T-cell (primary cell): ENCODE measurements at regions of chr15 and their contacts with region 1.

Region 1: DNA sequence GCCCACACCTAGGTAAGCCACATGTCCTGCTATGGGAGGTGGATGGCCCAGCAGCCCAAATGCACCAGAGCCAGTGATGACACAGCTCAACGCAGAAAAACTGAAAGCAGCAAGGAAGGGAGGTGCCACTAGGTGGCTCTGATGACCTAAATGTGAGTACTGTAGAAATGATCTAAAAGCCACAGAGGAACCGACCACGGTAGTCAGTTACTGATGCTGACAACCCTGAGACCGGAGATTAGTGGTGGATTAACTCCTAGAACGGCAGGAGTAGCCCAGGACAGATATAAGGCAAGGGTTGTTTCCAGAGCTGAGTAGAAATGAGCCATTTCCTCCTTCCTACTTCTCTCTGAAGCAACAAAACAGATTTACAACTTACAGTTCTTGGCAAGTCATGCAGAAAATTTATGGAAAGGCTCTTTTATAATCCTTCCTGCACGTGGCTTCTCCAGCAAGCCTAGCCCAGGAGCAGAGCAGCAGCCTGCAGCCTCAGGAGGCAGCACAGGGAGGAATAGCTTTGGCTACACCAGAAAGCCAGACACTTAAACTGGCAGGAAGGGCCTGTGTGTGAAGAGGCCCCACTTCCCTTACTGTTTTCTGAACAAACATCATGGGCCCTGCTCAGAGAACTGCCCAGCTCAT is 13.1 kb downstream of the FBXL22 start:
- DNase-seq: peak; percentile 27 to 84 (median 66)
- ATAC-seq: peak; percentile 80 to 82 (median 81)
- H3K4me3 ChIP-seq: no peak overlapping the region
- H3K4me3 Mint-ChIP-seq: peak overlapping the region in 1 of 3 donors; percentile 24
- H3K27ac ChIP-seq: peak overlapping the region; percentile 79
- H3K27ac Mint-ChIP-seq: peak overlapping the region; percentile 96 to 98
- H3K4me1 ChIP-seq: peaks cover 19 to 34% of the 10 kb centered on the region in 2 experiments
- H3K4me1 Mint-ChIP-seq: peaks cover 35 to 51% (median 44%) of the 10 kb centered on the region in 3 donors
- H3K27me3 ChIP-seq: no peaks in the 10 kb centered on the region
- H3K27me3 Mint-ChIP-seq: no peaks in the 10 kb centered on the region

Region 2: GRCh38 chr15:62912808-62913207 is 697.5 kb before region 1 on chr15:
- CTCF ChIA-PET with region 1: no interaction called
- POLR2A ChIA-PET with region 1: no interaction called
- DNase-seq: no peak
- ATAC-seq: no peak
- H3K4me3 ChIP-seq: no peak overlapping the region
- H3K4me3 Mint-ChIP-seq: no peak overlapping the region
- H3K27ac ChIP-seq: no peak overlapping the region
- H3K27ac Mint-ChIP-seq: no peak overlapping the region
- H3K4me1 ChIP-seq: no peaks in the 10 kb centered on the region
- H3K4me1 Mint-ChIP-seq: no peaks in the 10 kb centered on the region
- H3K27me3 ChIP-seq: peaks cover 0 to 24% of the 10 kb centered on the region in 2 experiments
- H3K27me3 Mint-ChIP-seq: peaks cover 20% of the 10 kb centered on the region in 2 donors

Region 3: DNA sequence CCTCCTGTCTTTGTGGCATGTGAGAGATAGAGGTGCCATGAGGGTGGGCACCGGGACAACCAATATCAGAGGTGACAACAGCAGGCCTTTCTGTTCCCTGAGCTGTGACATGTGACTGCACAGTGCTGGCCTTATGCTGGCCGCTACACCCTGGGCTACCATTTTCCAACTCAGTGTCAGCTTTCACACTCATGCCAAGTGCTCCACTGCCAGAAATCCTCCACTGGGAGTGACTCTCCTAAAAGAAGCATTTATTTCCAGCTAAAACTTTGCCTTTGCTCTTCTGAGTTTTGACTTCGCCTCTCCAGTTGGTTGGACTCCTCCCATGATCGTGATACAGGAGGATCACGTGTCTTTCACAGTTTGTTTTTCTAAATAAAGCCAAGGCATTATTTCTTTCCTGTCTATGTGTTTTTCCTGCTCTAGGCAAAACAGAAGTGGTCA is 260.1 kb before region 1 on chr15:
- CTCF ChIA-PET with region 1: no interaction called
- POLR2A ChIA-PET with region 1: no interaction called
- DNase-seq: no peak
- ATAC-seq: no peak
- H3K4me3 ChIP-seq: no peak overlapping the region
- H3K4me3 Mint-ChIP-seq: no peak overlapping the region
- H3K27ac ChIP-seq: no peak overlapping the region
- H3K27ac Mint-ChIP-seq: no peak overlapping the region
- H3K4me1 ChIP-seq: no peaks in the 10 kb centered on the region
- H3K4me1 Mint-ChIP-seq: no peaks in the 10 kb centered on the region
- H3K27me3 ChIP-seq: peaks cover 0 to 7% of the 10 kb centered on the region in 2 experiments
- H3K27me3 Mint-ChIP-seq: peaks cover 0 to 5% of the 10 kb centered on the region in 2 donors

Region 4: GRCh38 chr15:63655683-63656372 is 45.5 kb after region 1 on chr15:
- CTCF ChIA-PET with region 1: no interaction called
- POLR2A ChIA-PET with region 1: no interaction called
- DNase-seq: no peak
- ATAC-seq: no peak
- H3K4me3 ChIP-seq: no peak overlapping the region
- H3K4me3 Mint-ChIP-seq: no peak overlapping the region
- H3K27ac ChIP-seq: no peak overlapping the region
- H3K27ac Mint-ChIP-seq: no peak overlapping the region
- H3K4me1 ChIP-seq: no peaks in the 10 kb centered on the region
- H3K4me1 Mint-ChIP-seq: peaks cover 0 to 2% (median 0%) of the 10 kb centered on the region in 3 donors
- H3K27me3 ChIP-seq: no peaks in the 10 kb centered on the region
- H3K27me3 Mint-ChIP-seq: no peaks in the 10 kb centered on the region

Region 5: GRCh38 chr15:63708126-63708772 is 97.9 kb after region 1 on chr15:
- CTCF ChIA-PET with region 1: interaction called in 1 of 2 experiments, 10 read pairs
- POLR2A ChIA-PET with region 1: no interaction called
- DNase-seq: peak in 15 of 35 experiments; percentile 2 to 65 (median 12)
- ATAC-seq: peak; percentile 81 to 96 (median 93)
- H3K4me3 ChIP-seq: no peak overlapping the region
- H3K4me3 Mint-ChIP-seq: peak overlapping the region; percentile 11 to 34 (median 15)
- H3K27ac ChIP-seq: peak overlapping the region; percentile 92
- H3K27ac Mint-ChIP-seq: peak overlapping the region; percentile 91 to 94
- H3K4me1 ChIP-seq: peaks cover 10 to 14% of the 10 kb centered on the region in 2 experiments
- H3K4me1 Mint-ChIP-seq: peaks cover 6 to 27% (median 27%) of the 10 kb centered on the region in 3 donors
- H3K27me3 ChIP-seq: no peaks in the 10 kb centered on the region
- H3K27me3 Mint-ChIP-seq: no peaks in the 10 kb centered on the region

Region 6: GRCh38 chr15:65028921-65029735 is 1418.8 kb after region 1 on chr15 and contains the start of gene MTFMT:
- CTCF ChIA-PET with region 1: no interaction called
- POLR2A ChIA-PET with region 1: no interaction called
- DNase-seq: peak; percentile 77 to 96 (median 90)
- ATAC-seq: peak; percentile 96 to 98 (median 96)
- H3K4me3 ChIP-seq: peak within 1 kb of the TSS; percentile 86 to 90
- H3K4me3 Mint-ChIP-seq: peak within 1 kb of the TSS; percentile 85 to 88 (median 87)
- H3K27ac ChIP-seq: peak within 1 kb of the TSS; percentile 6
- H3K27ac Mint-ChIP-seq: peak within 1 kb of the TSS; percentile 69 to 75
- H3K4me1 ChIP-seq: peaks cover 11 to 21% of the 10 kb centered on the region in 2 experiments
- H3K4me1 Mint-ChIP-seq: peaks cover 22 to 28% (median 28%) of the 10 kb centered on the region in 3 donors
- H3K27me3 ChIP-seq: peaks cover 2 to 7% of the 10 kb centered on the region in 2 experiments
- H3K27me3 Mint-ChIP-seq: peaks cover 0 to 13% of the 10 kb centered on the region in 2 donors
- total RNA-seq, gene MTFMT: 10.3 to 22.0 (median 19.2) TPM